AG04450 (cell line): ENCODE measurements at regions of chr12 and their contacts with region 1.

Region 1: GRCh38 chr12:120234643-120235368 is 30.7 kb downstream of the PXN start:
- DNase-seq: peak; percentile 70
- H3K4me3 ChIP-seq: peak overlapping the region; percentile 27; the same call in 1 of the 2 replicates
- H3K27ac ChIP-seq: peak overlapping the region; percentile 96
- H3K27me3 ChIP-seq: no peaks in the 10 kb centered on the region
- CTCF ChIP-seq: peak; percentile 57

Region 2: DNA sequence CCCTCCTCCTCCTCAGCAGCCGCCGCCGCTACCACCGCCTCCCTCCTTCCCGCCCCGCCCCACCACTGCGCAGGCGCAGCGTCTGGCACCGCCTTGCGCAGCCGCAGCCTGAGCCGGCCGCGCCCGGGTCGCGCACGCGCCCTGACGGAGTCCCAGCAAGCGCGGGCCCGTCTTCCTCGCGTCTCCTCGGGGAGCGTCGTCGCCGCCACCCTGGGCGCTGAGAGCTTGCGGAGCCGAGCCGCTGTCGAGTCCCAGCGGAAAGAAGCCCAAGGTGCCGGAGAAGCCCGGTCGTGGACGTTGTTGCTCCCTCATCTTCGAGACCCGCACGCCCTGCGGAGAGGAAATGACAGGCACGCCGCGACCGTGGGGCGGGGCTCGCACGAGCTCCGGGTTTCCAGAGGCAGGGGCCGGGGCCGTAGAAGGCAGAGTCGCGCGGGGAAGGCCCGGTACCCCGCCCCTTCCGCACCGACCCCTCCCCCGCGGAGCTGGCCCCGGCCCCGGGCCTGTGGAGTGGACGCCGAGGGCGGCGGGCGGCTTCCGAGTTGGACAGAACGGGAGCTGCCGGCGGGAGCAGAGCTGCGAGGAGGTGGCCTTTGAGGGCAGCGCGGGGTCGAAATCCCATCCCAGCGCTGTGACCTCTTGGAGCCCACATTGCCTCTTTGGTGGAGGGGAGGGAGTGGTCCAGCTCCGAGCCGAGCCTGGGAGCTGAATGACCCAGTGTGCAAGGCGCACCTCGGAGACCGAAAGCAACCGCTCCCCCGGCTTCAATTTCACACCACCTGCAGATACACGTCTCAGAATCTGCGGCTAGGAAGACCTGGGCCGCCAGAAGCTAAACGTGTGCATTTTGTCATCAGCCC is 117.8 kb before region 1 on chr12:
- CTCF ChIA-PET with region 1: interaction called, 3 read pairs
- POLR2A ChIA-PET with region 1: interaction called, 11 read pairs
- DNase-seq: peak; percentile 74
- H3K4me3 ChIP-seq: peak overlapping the region; percentile 97
- H3K27ac ChIP-seq: peak overlapping the region; percentile 93
- H3K27me3 ChIP-seq: no peaks in the 10 kb centered on the region
- CTCF ChIP-seq: no peak

Region 3: GRCh38 chr12:120181991-120182631 is 52.7 kb before region 1 on chr12:
- CTCF ChIA-PET with region 1: no interaction called
- POLR2A ChIA-PET with region 1: no interaction called
- DNase-seq: no peak
- H3K4me3 ChIP-seq: no peak overlapping the region
- H3K27ac ChIP-seq: no peak overlapping the region
- H3K27me3 ChIP-seq: no peaks in the 10 kb centered on the region
- CTCF ChIP-seq: no peak

Region 4: DNA sequence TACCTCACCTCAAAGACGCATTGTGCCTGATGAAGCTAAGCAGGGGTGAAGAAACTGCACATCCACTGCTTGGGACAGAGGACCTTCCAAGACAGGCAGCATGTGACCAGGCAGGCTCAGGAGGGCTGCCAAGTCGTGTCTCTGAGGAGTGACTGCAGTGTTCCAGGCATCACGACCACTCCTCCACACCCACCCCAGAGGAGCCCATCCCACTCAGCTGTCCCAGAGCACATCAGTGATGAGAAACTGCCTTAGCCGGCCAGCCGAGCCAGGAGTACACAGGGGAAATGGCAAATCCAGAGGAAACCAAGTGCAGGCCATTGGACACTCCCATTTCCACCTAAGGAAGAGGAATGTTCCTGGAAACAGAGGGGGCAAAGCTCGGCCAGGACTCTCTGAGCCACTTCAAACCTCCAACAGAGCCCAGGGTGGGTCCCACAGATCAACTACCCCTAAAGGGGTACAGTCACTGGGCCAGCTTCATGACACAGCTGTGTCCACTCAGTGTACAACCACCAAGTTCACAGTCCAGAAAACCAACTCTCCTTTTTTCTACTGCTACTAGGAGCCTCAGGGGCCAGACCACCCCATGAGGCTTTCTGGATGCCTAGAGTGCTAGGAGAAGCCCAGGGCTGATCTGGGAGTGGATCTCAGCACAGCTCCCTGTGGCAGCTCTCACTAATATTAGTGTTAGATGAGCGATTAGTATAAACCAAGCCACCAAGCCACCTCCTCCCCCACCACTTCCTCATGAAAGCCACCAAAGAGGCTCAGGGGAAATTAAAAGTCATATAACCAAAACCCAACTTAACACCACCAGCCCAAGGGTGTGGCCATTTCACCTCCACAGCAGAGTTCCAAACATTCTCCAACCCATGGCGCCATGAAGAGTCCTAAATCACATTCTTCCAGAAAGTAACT is 15.3 kb after region 1 on chr12:
- CTCF ChIA-PET with region 1: interaction called, 685 read pairs
- POLR2A ChIA-PET with region 1: interaction called, 20 read pairs
- DNase-seq: no peak
- H3K4me3 ChIP-seq: no peak overlapping the region
- H3K27ac ChIP-seq: peak overlapping the region; percentile 47
- H3K27me3 ChIP-seq: no peaks in the 10 kb centered on the region
- CTCF ChIP-seq: no peak

Region 5: DNA sequence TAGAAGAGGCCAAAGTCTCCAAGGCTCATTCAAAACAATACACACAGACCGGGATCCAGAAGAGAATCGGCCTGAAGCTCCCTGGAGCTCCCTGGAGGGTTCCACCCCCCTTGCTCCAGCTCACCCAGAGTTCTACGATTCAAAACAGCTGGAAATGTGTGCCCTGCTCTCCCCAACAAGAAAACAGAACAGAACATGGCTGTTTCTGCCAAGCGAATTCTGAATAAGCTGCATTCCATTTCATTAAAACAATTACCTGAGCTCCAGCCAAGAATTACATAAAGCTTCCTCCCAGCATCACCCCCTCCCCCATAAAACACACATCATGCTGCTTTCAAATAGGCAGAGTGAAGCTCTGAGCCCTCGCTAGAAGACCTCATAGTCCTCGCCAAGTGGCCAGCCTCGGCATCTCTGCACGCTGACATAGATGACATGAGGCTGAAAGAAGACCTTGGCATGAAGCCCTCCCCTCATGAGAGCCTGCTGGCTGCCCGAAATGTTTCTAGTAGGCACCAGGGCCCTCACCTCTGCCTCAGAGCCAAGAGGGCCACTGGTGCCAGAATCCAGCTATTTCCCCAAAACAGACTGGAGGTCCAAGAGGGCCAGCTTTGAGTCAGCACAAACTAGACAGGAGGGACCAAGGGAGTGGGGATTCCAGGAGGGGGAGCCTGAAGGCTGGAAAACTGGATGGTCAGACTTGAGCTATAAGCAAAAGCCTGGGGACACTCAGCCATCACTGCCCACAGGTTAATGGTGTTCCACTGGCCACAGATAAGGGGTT is 22.4 kb after region 1 on chr12:
- CTCF ChIA-PET with region 1: interaction called, 685 read pairs
- POLR2A ChIA-PET with region 1: interaction called, 118 read pairs
- DNase-seq: peak; percentile 84
- H3K4me3 ChIP-seq: peak overlapping the region; percentile 35
- H3K27ac ChIP-seq: peak overlapping the region; percentile 82
- H3K27me3 ChIP-seq: no peaks in the 10 kb centered on the region
- CTCF ChIP-seq: peak; percentile 4; the same call in 1 of the 2 replicates

Region 6: DNA sequence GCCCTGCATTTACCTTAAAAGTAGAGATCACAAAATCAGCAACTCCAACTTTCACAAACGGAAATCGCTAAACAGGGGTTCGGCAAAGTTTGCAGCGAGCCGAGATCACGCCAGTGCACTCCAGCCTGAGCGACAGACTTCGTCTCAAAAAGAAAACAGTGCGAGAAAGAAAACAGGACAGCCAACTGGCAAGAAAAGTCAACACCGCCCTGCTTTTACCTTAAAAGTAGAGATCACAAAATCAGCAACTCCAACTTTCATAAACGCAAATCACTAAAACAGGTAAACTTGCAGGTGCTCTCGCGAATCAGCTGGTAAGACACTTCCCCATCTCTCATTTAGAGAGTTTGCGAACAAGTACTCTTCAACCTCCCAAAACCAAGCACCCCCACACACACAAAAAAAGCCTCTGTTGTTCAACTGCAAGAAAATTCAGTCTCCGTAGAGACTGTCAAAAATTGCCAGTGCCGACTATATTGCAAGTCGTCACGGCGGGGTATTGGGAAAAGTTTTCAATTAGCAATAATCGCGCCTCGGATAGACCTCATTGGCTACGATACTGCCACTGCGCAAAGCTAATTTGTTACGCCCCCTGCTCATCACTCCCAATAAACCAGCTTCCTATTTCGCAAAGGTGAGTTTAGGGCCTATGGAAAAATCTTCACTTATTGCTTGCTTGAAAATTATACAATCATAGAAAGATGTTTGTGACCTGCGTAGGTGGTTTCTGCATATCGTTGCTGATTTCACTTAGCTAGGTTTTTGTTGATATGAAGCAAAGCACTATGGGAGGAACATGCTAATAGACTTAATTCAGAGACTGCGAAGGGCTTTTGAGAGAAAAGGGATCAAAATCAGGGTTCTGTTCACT is 58.1 kb after region 1 on chr12 and contains the start of gene RNU4-1:
- CTCF ChIA-PET with region 1: interaction called, 68 read pairs
- POLR2A ChIA-PET with region 1: interaction called, 245 read pairs
- DNase-seq: peak; percentile 95
- H3K4me3 ChIP-seq: peak within 1 kb of the TSS; percentile 62
- H3K27ac ChIP-seq: peak within 1 kb of the TSS; percentile 100
- H3K27me3 ChIP-seq: no peaks in the 10 kb centered on the region
- CTCF ChIP-seq: no peak
- polyA plus RNA-seq, gene RNU4-1: under 0.01 TPM in 1 of 2 replicates, not detected in the other